Aorta (tissue), 5 donors: ENCODE measurements at regions of chr18 and their contacts with region 1.

Region 1: GRCh38 chr18:44799907-44800421 is 119.3 kb downstream of the SETBP1 start:
- DNase-seq: no peak
- ATAC-seq: no peak
- H3K4me3 ChIP-seq: no peak overlapping the region
- H3K27ac ChIP-seq: no peak overlapping the region
- H3K4me1 ChIP-seq: peaks cover 2 to 6% of the 10 kb centered on the region in 2 donors
- H3K27me3 ChIP-seq: no peaks in the 10 kb centered on the region

Region 2: DNA sequence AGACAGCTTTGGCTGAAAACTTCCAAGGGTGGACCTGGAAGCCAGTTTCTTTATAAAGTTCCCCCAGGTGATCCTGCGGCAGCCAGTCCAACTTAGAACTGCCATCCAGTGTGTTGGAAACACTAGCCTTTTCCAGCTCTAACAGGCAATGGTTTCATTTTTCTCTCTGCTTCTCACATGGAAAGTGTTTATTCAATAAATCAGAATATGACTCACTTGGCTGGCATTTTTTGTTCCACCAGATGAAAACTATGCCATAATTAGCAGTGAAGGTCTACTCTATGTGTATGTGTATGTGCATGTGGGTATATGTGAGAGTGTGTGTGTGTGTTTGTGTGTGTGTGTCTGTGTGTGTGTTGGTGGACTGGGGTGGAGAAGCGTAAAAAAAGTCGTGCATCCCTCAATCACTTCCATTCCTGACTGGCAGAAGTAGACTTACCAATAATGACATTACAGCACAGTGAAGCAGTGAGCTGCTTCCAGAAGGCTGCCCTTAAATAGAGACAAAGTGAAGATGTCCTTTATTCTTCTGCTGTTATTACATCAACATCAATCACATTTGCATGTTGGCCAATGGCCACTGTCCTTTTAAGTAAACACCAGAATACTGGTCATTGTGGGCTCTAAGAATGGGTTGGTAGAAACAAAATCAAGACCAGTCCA is 210.1 kb before region 1 on chr18:
- intact Hi-C with region 1: loop called in 1 of 2 experiments (anchors 10 kb)
- DNase-seq: no peak
- ATAC-seq: peak; percentile 72
- H3K4me3 ChIP-seq: no peak overlapping the region
- H3K27ac ChIP-seq: peak overlapping the region in 1 of 2 donors; percentile 74
- H3K4me1 ChIP-seq: peaks cover 10 to 19% of the 10 kb centered on the region in 2 donors
- H3K27me3 ChIP-seq: no peaks in the 10 kb centered on the region